ENCODE measurements at regions of chr1 and their contacts with region 1.

Region 1: DNA sequence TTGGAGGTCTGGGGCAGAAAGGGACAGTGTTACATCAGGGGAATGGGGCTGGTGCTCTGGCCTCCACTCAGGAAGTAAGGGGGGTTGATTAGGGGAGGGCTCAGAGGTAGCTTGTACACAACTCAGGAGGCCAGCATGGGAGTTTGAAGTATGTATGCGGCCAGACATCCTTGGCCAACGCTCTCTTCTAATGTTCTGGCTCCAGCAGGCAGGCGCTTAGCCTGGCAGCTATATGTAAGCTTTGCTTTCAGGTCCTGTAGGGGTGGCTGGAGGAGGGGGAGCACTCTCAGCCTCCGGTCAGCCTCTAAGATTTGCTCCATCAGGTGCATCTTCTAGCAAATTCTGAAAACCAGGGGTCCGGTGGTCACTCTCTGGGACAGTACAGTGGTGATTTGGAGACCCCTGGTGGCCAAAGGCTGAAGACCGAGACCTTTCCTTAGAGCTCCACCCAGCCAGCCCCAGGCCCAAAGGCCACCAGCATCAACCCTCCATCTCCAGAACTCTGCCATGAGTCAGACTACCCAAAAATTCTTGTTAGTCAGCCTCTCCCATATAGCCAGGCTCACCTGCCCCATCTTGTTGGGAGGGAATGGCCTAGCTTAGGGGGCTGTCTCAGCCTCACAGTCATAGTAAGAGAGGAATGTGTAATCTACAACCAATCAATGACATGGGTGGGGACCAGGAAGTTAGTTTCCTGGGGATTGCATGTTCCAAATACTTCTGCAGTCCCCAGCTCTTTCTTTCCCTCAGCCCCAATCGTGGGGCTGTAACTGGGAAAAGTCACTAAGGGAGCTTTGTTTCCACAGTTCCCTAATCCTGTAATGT is 9.7 kb upstream of the COL8A2 start:
- DNase-seq: no peak
- ATAC-seq: peak; percentile 79
- H3K4me3 ChIP-seq: no peak overlapping the region
- H3K4me3 Mint-ChIP-seq: no peak overlapping the region
- H3K27ac ChIP-seq: no peak overlapping the region
- H3K27ac Mint-ChIP-seq: peak overlapping the region in 8 of 9 donors; percentile 18 to 79 (median 54)
- H3K4me1 ChIP-seq: no peaks in the 10 kb centered on the region
- H3K4me1 Mint-ChIP-seq: peaks cover 0 to 11% (median 8%) of the 10 kb centered on the region in 7 donors
- H3K27me3 ChIP-seq: no peaks in the 10 kb centered on the region
- H3K27me3 Mint-ChIP-seq: no peaks in the 10 kb centered on the region

Region 2: DNA sequence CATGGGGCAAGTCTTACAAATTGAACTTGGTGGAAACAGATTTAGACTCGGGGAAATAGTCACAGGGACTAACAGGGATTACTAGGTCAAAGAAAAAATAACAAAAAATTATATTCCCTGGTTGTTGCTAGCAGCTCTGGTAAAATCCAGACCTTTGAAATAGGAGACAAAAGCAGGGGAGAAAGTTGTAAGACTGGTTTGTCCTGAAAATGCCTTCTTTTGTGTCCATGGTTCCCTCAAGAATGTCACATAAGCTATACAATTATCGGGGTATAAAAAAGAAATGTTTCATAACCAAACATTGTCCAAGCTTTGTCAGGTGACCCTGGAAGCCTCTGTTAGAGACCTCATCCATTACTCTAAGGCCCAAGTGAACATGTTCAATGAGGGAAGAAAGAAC is 610.6 kb before region 1 on chr1:
- CTCF ChIA-PET with region 1: no interaction called
- POLR2A ChIA-PET with region 1: no interaction called
- intact Hi-C with region 1: no loop called
- DNase-seq: no peak
- ATAC-seq: no peak
- H3K4me3 ChIP-seq: no peak overlapping the region
- H3K4me3 Mint-ChIP-seq: no peak overlapping the region
- H3K27ac ChIP-seq: no peak overlapping the region
- H3K27ac Mint-ChIP-seq: peak overlapping the region in 1 of 9 donors; percentile 35
- H3K4me1 ChIP-seq: no peaks in the 10 kb centered on the region
- H3K4me1 Mint-ChIP-seq: peaks cover 11 to 30% (median 17%) of the 10 kb centered on the region in 7 donors
- H3K27me3 ChIP-seq: no peaks in the 10 kb centered on the region
- H3K27me3 Mint-ChIP-seq: no peaks in the 10 kb centered on the region

Region 3: DNA sequence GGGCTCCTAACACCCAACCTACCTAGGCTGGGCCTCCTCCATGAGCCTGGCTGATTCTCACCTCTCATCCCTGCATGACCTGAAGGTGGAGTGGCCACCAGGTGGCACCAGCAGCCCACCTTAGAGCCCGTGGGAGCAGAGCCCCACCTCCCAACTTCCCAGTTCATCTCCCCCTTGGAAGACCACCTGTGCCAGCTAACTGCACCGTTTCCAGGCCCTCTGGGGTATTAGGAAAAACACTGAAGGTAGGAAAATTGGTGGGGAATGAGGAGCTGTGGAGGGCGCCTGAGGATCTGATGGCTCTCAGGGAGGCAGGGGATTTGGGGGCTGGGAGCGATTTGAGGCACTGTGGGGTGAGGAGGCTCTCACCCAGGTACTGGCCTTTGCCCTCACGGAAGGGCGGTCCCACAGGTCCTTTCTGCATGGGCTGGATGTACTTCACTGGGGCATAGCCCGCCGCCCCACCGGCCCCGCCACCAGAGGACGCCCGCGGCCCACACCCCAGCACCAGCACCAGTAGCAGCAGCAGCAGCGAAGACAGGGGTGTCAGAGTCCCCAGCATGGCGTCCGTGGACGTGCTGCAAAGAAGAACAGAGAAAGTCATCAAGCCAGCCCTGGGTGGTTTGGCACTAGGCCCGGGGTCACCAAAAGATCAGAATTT is 34.9 kb before region 1 on chr1:
- CTCF ChIA-PET with region 1: interaction called, 77 read pairs
- POLR2A ChIA-PET with region 1: interaction called, 6 read pairs
- intact Hi-C with region 1: loop called (anchors 1 kb)
- DNase-seq: peak; percentile 50 to 79 (median 65)
- ATAC-seq: peak; percentile 92
- H3K4me3 ChIP-seq: no peak overlapping the region
- H3K4me3 Mint-ChIP-seq: peak overlapping the region in 5 of 10 donors; percentile 12 to 50 (median 35)
- H3K27ac ChIP-seq: no peak overlapping the region
- H3K27ac Mint-ChIP-seq: peak overlapping the region in 1 of 9 donors; percentile 14
- H3K4me1 ChIP-seq: no peaks in the 10 kb centered on the region
- H3K4me1 Mint-ChIP-seq: peaks cover 0 to 10% (median 2%) of the 10 kb centered on the region in 7 donors
- H3K27me3 ChIP-seq: no peaks in the 10 kb centered on the region
- H3K27me3 Mint-ChIP-seq: no peaks in the 10 kb centered on the region

Region 4: DNA sequence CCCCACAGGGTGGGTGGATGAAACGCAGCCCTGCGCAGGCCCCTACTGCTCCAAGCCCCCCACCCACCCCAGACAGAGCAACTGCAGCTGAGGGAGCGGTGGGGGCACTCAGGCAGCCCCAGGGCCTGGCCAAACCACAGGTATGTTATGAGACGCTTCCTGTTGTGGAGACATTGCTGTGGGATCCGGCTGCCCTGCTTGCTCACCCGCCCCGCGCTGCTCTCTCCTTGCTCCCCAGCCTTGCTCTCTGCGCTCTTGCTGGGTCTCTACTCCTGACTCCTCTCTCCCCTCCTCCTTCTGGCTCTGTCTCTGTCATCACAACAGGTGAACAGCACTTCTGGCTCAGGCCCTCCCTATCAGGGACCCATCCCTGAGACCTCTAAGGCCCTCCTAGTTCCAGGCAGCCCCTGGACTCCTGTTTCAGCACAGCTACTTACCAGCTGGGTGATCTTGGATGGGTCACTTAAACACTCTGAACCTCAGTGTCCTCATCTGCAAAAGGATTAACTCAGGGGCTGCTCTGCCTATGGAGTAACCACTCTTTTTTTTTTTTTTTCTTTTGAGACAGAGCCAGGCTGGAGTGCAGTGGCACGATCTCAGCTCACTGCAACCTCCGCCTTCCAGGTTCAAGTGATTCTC is 25.6 kb before region 1 on chr1:
- CTCF ChIA-PET with region 1: interaction called, 77 read pairs
- POLR2A ChIA-PET with region 1: interaction called, 4 read pairs
- intact Hi-C with region 1: no loop called
- DNase-seq: peak in 7 of 9 donors; percentile 42 to 67 (median 61)
- ATAC-seq: peak; percentile 92
- H3K4me3 ChIP-seq: no peak overlapping the region
- H3K4me3 Mint-ChIP-seq: peak overlapping the region in 9 of 10 donors; percentile 12 to 85 (median 68)
- H3K27ac ChIP-seq: peak overlapping the region; percentile 56
- H3K27ac Mint-ChIP-seq: peak overlapping the region; percentile 35 to 97 (median 80)
- H3K4me1 ChIP-seq: peaks cover 0 to 15% of the 10 kb centered on the region in 2 donors
- H3K4me1 Mint-ChIP-seq: peaks cover 21 to 38% (median 32%) of the 10 kb centered on the region in 7 donors
- H3K27me3 ChIP-seq: no peaks in the 10 kb centered on the region
- H3K27me3 Mint-ChIP-seq: no peaks in the 10 kb centered on the region

Region 5: GRCh38 chr1:36285448-36286101 is 150.9 kb after region 1 on chr1:
- CTCF ChIA-PET with region 1: interaction called, 13 read pairs
- POLR2A ChIA-PET with region 1: interaction called, 3 read pairs
- intact Hi-C with region 1: no loop called
- DNase-seq: peak in 7 of 9 donors; percentile 60 to 80 (median 73)
- ATAC-seq: peak; percentile 96
- H3K4me3 ChIP-seq: no peak overlapping the region
- H3K4me3 Mint-ChIP-seq: no peak overlapping the region
- H3K27ac ChIP-seq: no peak overlapping the region
- H3K27ac Mint-ChIP-seq: peak overlapping the region in 8 of 9 donors; percentile 3 to 87 (median 42)
- H3K4me1 ChIP-seq: no peaks in the 10 kb centered on the region
- H3K4me1 Mint-ChIP-seq: peaks cover 4 to 34% (median 17%) of the 10 kb centered on the region in 7 donors
- H3K27me3 ChIP-seq: no peaks in the 10 kb centered on the region
- H3K27me3 Mint-ChIP-seq: no peaks in the 10 kb centered on the region

Region 6: DNA sequence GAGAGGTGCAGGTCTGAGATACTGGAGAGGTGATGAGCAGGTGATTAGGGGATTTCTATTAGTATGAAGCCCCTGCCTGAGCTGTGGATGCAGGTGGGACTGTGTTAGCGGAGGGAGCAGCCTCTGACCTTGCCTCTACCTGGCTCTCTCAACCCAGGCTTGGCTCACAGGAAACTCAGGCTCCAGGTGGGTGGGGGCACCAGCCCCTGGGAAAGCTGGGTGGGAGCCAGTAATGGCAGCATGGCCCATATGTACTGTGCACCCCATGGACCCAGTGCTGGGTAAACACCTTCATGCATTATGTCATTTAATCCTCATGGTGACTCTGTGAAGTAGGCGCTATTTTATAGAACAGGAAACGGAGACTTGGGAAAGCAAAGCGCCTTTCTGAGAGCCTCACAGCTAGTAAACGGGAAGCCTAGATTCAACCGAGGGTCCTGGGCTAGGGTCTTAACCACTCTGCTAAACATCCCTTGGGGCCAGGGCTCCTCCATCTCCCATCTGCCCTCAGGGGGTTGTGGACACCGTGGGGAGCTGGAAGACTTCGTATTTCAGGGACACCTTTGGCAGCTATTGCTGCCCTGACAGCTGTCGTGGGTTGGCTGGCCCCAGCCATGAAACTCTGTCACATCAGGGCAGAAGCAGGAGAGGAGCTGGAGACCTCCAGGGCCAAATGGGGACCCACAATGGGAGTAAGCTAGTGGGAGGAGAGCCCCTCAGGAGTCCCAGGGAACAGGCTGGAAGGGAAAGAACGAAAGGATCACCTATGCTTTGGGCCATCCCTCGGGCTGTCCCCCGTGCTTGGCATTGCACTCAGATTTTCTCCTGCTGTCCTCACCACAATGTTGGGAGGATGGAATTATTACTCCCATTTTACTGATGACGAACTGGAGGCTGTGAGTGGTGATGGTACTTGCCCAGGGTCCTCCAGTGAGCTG is 407.6 kb after region 1 on chr1:
- CTCF ChIA-PET with region 1: no interaction called
- POLR2A ChIA-PET with region 1: no interaction called
- intact Hi-C with region 1: no loop called
- DNase-seq: no peak
- ATAC-seq: no peak
- H3K4me3 ChIP-seq: no peak overlapping the region
- H3K4me3 Mint-ChIP-seq: no peak overlapping the region
- H3K27ac ChIP-seq: no peak overlapping the region
- H3K27ac Mint-ChIP-seq: no peak overlapping the region
- H3K4me1 ChIP-seq: no peaks in the 10 kb centered on the region
- H3K4me1 Mint-ChIP-seq: no peaks in the 10 kb centered on the region
- H3K27me3 ChIP-seq: peaks cover 0 to 3% of the 10 kb centered on the region in 2 donors
- H3K27me3 Mint-ChIP-seq: peaks cover 10 to 40% (median 28%) of the 10 kb centered on the region in 5 donors

Measured in naive thymus-derived CD4-positive, alpha-beta T cell (primary cell).